CD8-positive, alpha-beta T cell (primary cell): ENCODE measurements at regions of chr1 and their contacts with region 1.

Region 1: GRCh38 chr1:109910123-109910962 is at the start of gene CSF1:
- DNase-seq: peak; percentile 24 to 84 (median 55)
- ATAC-seq: peak; percentile 50
- H3K4me3 ChIP-seq: peak within 1 kb of the TSS; percentile 53 to 66
- H3K4me3 Mint-ChIP-seq: peak within 1 kb of the TSS; percentile 88
- H3K27ac ChIP-seq: peak within 1 kb of the TSS in 1 of 2 experiments; percentile 29
- H3K27ac Mint-ChIP-seq: peak within 1 kb of the TSS; percentile 83
- H3K4me1 ChIP-seq: peaks cover 32% of the 10 kb centered on the region
- H3K4me1 Mint-ChIP-seq: peaks cover 61% of the 10 kb centered on the region
- H3K27me3 ChIP-seq: no peaks in the 10 kb centered on the region
- H3K27me3 Mint-ChIP-seq: no peaks in the 10 kb centered on the region
- CTCF ChIP-seq: no peak
- total RNA-seq, gene CSF1: 5.6 to 5.8 TPM

Region 2: DNA sequence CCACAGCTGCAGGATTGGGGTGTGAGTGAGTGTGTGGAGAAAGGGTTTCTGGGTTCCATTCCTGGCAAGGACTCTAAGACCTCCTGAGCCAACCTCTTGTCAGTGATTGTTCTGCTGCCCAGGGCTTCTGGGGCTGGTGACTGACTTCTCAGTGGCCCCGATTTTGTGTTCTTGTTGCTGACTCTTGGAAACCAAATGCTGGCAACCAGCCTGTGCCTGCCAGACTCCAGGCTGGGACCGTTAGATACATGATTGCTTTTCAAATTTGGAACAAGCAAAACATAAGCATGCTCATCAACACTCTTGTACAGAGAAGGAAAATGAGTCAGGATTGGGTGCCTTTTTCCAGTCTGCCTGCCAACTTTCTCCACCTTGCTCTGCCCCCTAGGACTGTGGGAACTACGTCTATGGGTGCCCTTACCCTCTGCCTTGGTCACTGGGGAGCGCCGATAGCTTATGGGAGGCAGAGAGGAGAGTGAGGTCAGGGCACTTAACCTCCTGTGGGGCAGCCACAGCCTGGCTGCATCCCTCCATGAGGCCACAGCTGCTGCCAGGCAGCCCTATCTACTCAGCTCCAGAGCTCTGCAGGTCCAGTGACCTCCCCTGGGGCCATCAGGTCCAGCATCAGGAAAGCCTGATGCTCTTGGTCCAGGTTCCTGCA is 107.3 kb before region 1 on chr1:
- CTCF ChIA-PET with region 1: no interaction called
- POLR2A ChIA-PET with region 1: interaction called, 3 read pairs
- intact Hi-C with region 1: loop called in 1 of 2 experiments (anchors 2 kb)
- DNase-seq: no peak
- ATAC-seq: no peak
- H3K4me3 ChIP-seq: peak overlapping the region; percentile 10 to 28
- H3K4me3 Mint-ChIP-seq: peak overlapping the region; percentile 73
- H3K27ac ChIP-seq: peak overlapping the region; percentile 1 to 55
- H3K27ac Mint-ChIP-seq: peak overlapping the region; percentile 85
- H3K4me1 ChIP-seq: peaks cover 62% of the 10 kb centered on the region
- H3K4me1 Mint-ChIP-seq: peaks cover 61% of the 10 kb centered on the region
- H3K27me3 ChIP-seq: no peaks in the 10 kb centered on the region
- H3K27me3 Mint-ChIP-seq: no peaks in the 10 kb centered on the region
- CTCF ChIP-seq: no peak